Naive thymus-derived CD4-positive, alpha-beta T cell (primary cell): ENCODE measurements at regions of chr6 and their contacts with region 1.

Region 1: GRCh38 chr6:124254941-124255685 is 451.4 kb downstream of the NKAIN2 start:
- DNase-seq: no peak
- ATAC-seq: no peak
- H3K4me3 ChIP-seq: no peak overlapping the region
- H3K4me3 Mint-ChIP-seq: no peak overlapping the region
- H3K27ac ChIP-seq: no peak overlapping the region
- H3K27ac Mint-ChIP-seq: no peak overlapping the region
- H3K4me1 ChIP-seq: no peaks in the 10 kb centered on the region
- H3K4me1 Mint-ChIP-seq: no peaks in the 10 kb centered on the region
- H3K27me3 ChIP-seq: no peaks in the 10 kb centered on the region
- H3K27me3 Mint-ChIP-seq: no peaks in the 10 kb centered on the region

Region 2: GRCh38 chr6:124283486-124283885 is 28.4 kb after region 1 on chr6:
- CTCF ChIA-PET with region 1: no interaction called
- POLR2A ChIA-PET with region 1: no interaction called
- intact Hi-C with region 1: loop called in 1 of 2 experiments (anchors 1 kb)
- DNase-seq: no peak
- ATAC-seq: no peak
- H3K4me3 ChIP-seq: no peak overlapping the region
- H3K4me3 Mint-ChIP-seq: no peak overlapping the region
- H3K27ac ChIP-seq: no peak overlapping the region
- H3K27ac Mint-ChIP-seq: no peak overlapping the region
- H3K4me1 ChIP-seq: no peaks in the 10 kb centered on the region
- H3K4me1 Mint-ChIP-seq: no peaks in the 10 kb centered on the region
- H3K27me3 ChIP-seq: no peaks in the 10 kb centered on the region
- H3K27me3 Mint-ChIP-seq: no peaks in the 10 kb centered on the region